ENCODE measurements at regions of chr15 and their contacts with region 1.

Region 1: GRCh38 chr15:23648920-23649515 is 1.4 kb upstream of the MAGEL2 start:
- DNase-seq: peak; percentile 38 to 69 (median 51)
- ATAC-seq: peak; percentile 47
- H3K4me3 ChIP-seq: no peak overlapping the region
- H3K27ac ChIP-seq: no peak overlapping the region
- H3K4me1 ChIP-seq: no peaks in the 10 kb centered on the region
- H3K27me3 ChIP-seq: no peaks in the 10 kb centered on the region
- CTCF ChIP-seq: peak; percentile 48 to 64 (median 58)
- POLR2A ChIP-seq: no peak

Region 2: DNA sequence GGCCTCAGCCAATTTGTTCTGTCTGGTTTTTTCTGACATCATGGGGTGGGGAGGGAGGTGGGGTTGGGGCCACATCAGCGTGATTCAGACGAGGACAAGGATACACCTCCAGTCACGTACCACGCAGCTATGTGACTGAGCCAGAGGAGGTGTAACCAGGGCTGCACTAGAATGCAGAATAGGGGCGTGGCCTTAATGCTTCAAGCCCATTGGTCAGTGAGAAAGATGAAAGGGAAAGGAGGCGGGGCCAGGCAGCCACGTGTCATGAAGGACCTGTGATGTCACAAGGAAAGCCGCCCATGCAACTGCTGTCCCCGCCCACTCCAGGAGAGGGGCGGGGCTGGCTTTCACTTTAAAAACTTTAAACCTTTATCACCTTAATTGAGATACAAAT is 201.9 kb before region 1 on chr15 and contains the start of gene GOLGA6L2:
- intact Hi-C with region 1: no loop called
- DNase-seq: no peak
- ATAC-seq: no peak
- H3K4me3 ChIP-seq: no peak within 1 kb of the TSS
- H3K27ac ChIP-seq: no peak within 1 kb of the TSS
- H3K4me1 ChIP-seq: no peaks in the 10 kb centered on the region
- H3K27me3 ChIP-seq: no peaks in the 10 kb centered on the region
- CTCF ChIP-seq: no peak
- POLR2A ChIP-seq: no peak
- total RNA-seq, gene GOLGA6L2: not detected

Region 3: GRCh38 chr15:23854203-23854911 is 205.3 kb after region 1 on chr15:
- intact Hi-C with region 1: loop called (anchors 5 kb)
- DNase-seq: no peak
- ATAC-seq: no peak
- H3K4me3 ChIP-seq: no peak overlapping the region
- H3K27ac ChIP-seq: no peak overlapping the region
- H3K4me1 ChIP-seq: no peaks in the 10 kb centered on the region
- H3K27me3 ChIP-seq: no peaks in the 10 kb centered on the region
- CTCF ChIP-seq: no peak
- POLR2A ChIP-seq: no peak

Region 4: DNA sequence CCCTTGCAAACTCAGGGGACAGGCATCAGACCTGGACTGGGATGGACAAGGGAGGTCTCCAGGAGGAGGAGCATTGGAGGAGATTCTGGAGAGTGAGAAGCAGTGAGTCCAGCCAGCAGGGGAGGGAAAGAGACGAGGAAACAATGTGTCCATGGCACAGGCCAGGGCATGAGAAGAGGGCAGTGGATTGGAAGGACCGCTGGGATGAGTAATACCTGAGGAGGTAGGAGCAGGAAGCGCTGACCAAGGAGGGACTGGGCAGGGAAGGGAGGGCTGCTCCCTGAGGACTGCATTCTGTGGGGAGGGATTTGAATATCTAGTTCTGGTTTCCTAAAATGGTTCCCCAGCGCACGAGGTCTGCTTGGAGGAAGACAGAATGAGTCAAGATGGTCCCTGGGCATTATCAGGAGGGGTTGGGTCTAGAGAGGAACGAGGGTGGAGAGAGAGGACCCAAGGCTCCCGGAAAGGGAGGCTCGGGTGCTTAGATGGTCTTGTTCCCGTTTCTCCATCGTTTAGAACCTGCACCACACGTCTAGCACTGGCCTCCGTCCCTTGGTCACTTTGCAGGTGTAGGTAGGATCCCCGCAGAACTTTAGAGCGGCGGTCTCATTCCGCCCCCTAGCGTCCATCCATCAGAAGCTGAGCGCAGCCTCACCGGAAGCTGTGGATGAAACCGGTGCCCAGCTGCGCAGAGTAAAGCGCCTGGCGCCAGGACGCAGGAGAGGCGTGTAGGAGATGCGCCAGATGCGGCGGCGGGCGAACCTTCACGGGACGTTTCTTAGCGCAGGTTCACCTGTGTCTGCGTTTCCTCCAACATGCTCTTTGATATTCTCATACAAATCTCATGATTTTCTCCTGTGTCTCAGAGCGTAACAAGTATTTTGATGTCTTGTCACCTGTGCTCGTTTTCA is 228.7 kb after region 1 on chr15:
- intact Hi-C with region 1: loop called (anchors 5 kb)
- DNase-seq: peak; percentile 74 to 80 (median 75)
- ATAC-seq: peak; percentile 80
- H3K4me3 ChIP-seq: no peak overlapping the region
- H3K27ac ChIP-seq: no peak overlapping the region
- H3K4me1 ChIP-seq: no peaks in the 10 kb centered on the region
- H3K27me3 ChIP-seq: no peaks in the 10 kb centered on the region
- CTCF ChIP-seq: peak; percentile 40 to 82 (median 74)
- POLR2A ChIP-seq: no peak